Endothelial cell of umbilical vein (primary cell): ENCODE measurements at regions of chr12 and their contacts with region 1.

Region 1: GRCh38 chr12:120686690-120687577 is at the start of gene MLEC:
- DNase-seq: peak; percentile 97
- H3K4me3 ChIP-seq: peak within 1 kb of the TSS; percentile 77 to 88 (median 80)
- H3K27ac ChIP-seq: peak within 1 kb of the TSS; percentile 86
- H3K4me1 ChIP-seq: peaks cover 27% of the 10 kb centered on the region
- H3K27me3 ChIP-seq: no peaks in the 10 kb centered on the region
- CTCF ChIP-seq: no peak
- POLR2A ChIP-seq: peak; percentile 72
- total RNA-seq, gene MLEC: 132 and 144 TPM in 2 replicates

Region 2: GRCh38 chr12:120394483-120395367 is 292.2 kb before region 1 on chr12:
- CTCF ChIA-PET with region 1: no interaction called
- POLR2A ChIA-PET with region 1: no interaction called
- dilution Hi-C with region 1: no loop called
- intact Hi-C with region 1: no loop called
- DNase-seq: no peak
- H3K4me3 ChIP-seq: no peak overlapping the region
- H3K27ac ChIP-seq: no peak overlapping the region
- H3K4me1 ChIP-seq: no peaks in the 10 kb centered on the region
- H3K27me3 ChIP-seq: peaks cover 9 to 11% of the 10 kb centered on the region in 2 experiments
- CTCF ChIP-seq: no peak
- POLR2A ChIP-seq: no peak

Region 3: GRCh38 chr12:120698665-120699064 is 11.7 kb after region 1 on chr12:
- CTCF ChIA-PET with region 1: interaction called, 17 read pairs
- POLR2A ChIA-PET with region 1: interaction called, 3 read pairs
- dilution Hi-C with region 1: no loop called
- intact Hi-C with region 1: loop called (anchors 1 kb)
- DNase-seq: peak; percentile 71
- H3K4me3 ChIP-seq: no peak overlapping the region
- H3K27ac ChIP-seq: peak overlapping the region; percentile 66
- H3K4me1 ChIP-seq: peaks cover 17% of the 10 kb centered on the region
- H3K27me3 ChIP-seq: no peaks in the 10 kb centered on the region
- CTCF ChIP-seq: no peak
- POLR2A ChIP-seq: no peak

Region 4: GRCh38 chr12:120710031-120710804 is 23.3 kb after region 1 on chr12 and contains the start of gene UNC119B:
- CTCF ChIA-PET with region 1: no interaction called
- POLR2A ChIA-PET with region 1: no interaction called
- dilution Hi-C with region 1: no loop called
- intact Hi-C with region 1: loop called (anchors 1 kb)
- DNase-seq: peak; percentile 74
- H3K4me3 ChIP-seq: peak within 1 kb of the TSS; percentile 52 to 66 (median 56)
- H3K27ac ChIP-seq: peak within 1 kb of the TSS; percentile 37
- H3K4me1 ChIP-seq: peaks cover 13% of the 10 kb centered on the region
- H3K27me3 ChIP-seq: no peaks in the 10 kb centered on the region
- CTCF ChIP-seq: no peak
- POLR2A ChIP-seq: peak; percentile 69
- total RNA-seq, gene UNC119B: 26.8 and 33.7 TPM in 2 replicates

Region 5: DNA sequence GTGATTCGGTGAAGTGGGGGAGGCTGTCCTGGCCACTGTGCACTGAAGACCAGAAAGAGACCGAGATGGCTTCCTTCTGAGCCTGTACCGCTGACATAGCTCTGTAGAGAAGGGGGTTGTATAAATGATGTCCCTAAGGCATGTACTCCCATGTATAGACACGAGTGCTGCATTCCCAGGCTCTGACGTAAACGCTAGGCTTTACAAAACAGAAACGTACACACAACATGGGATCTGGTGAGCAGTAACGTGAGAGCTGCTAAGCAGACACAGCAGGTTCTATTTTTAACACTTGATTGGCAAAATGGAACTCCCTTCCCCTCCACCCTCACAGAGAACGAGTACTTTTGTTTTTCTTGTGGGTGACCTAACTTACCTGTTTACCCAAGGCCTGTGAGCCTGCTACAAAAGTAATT is 74.6 kb after region 1 on chr12:
- CTCF ChIA-PET with region 1: no interaction called
- POLR2A ChIA-PET with region 1: no interaction called
- dilution Hi-C with region 1: no loop called
- intact Hi-C with region 1: no loop called
- DNase-seq: no peak
- H3K4me3 ChIP-seq: no peak overlapping the region
- H3K27ac ChIP-seq: no peak overlapping the region
- H3K4me1 ChIP-seq: no peaks in the 10 kb centered on the region
- H3K27me3 ChIP-seq: no peaks in the 10 kb centered on the region
- CTCF ChIP-seq: no peak
- POLR2A ChIP-seq: no peak